SK-MEL-5 (cell line): ENCODE measurements at regions of chr3 and their contacts with region 1.

Region 1: GRCh38 chr3:158918008-158918407 is 116.2 kb downstream of the MFSD1 start:
- DNase-seq: peak; percentile 75

Region 2: GRCh38 chr3:158830391-158830790 is 87.6 kb before region 1 on chr3:
- in situ Hi-C with region 1: no loop called
- DNase-seq: no peak

Region 3: GRCh38 chr3:159001711-159002110 is 83.7 kb after region 1 on chr3:
- in situ Hi-C with region 1: no loop called
- DNase-seq: no peak

Region 4: DNA sequence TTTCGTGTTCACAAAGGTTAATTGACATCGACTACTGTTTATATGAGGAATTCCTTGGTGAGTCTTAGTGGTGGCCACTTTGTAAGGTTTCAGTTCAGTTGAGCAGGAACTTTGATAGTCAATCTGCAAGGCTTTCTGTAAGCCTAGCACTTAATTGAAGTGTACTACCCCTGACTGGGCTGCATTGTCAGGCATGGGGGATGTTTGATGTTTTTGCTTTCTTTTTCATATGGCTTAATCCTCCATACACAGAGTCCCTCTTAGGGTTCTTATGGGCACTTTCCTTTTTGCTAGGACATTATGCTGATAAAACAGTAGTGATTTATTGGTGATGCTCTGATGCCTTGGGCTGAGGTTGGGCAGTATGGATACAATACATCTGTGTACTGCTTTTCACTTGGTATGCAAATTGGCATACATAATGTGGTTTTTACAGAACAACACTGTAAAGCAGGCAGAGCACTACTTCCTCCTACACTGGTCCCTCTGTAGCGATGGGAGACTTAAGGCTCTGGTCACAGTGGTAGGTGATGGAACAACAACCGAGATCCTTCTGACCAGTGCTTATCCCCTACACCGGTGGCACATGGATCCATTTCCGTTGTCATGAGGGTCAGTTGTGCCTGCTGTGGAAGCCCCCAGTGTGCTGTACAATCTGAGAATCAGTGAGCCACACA is 144.9 kb after region 1 on chr3:
- in situ Hi-C with region 1: no loop called
- DNase-seq: no peak

Region 5: DNA sequence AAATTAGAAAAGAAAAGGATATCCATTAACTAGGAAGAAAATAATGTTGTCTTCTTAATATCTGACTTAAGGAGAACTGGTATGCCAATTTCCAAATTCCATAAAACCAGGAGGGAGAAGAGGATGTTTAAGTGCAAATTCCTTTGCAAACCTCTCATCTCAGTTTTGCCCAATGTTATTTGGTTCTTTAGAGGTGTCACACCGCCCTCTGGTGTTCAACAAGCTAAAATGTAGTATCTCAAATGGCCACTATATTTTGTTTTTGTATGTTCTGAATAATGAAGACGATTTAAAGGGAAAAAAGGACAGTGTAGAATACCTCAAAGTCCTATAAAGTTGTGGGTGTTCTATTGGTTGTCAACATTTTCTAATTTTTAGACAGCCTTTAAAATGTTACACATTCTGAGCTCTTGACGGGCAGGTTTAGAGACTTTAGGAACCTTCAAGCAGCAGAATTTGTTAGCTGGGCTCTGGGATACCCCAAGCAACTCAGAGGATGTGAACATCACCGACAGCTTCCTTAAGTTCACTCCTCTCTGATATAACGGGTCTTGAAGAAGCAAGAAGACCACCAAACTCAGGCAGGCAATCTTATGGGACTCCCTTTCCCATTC is 342.1 kb after region 1 on chr3:
- in situ Hi-C with region 1: loop called (anchors 25 kb)
- DNase-seq: peak; percentile 81